Mammary epithelial cell (primary cell): ENCODE measurements at regions of chr1 and their contacts with region 1.

Region 1: GRCh38 chr1:81800695-81801650 is at the start of gene ADGRL2:
- DNase-seq: peak; percentile 91
- H3K4me3 ChIP-seq: peak within 1 kb of the TSS; percentile 80 to 94 (median 85)
- H3K27ac ChIP-seq: peak within 1 kb of the TSS; percentile 81
- H3K4me1 ChIP-seq: no peaks in the 10 kb centered on the region
- H3K27me3 ChIP-seq: no peaks in the 10 kb centered on the region
- CTCF ChIP-seq: no peak
- total RNA-seq, gene ADGRL2: 43.7 to 105 TPM

Region 2: GRCh38 chr1:81574408-81574807 is 226.6 kb before region 1 on chr1:
- CTCF ChIA-PET with region 1: no interaction called
- dilution Hi-C with region 1: no loop called
- in situ Hi-C with region 1: no loop called
- intact Hi-C with region 1: no loop called
- DNase-seq: no peak
- H3K4me3 ChIP-seq: no peak overlapping the region
- H3K27ac ChIP-seq: no peak overlapping the region
- H3K4me1 ChIP-seq: no peaks in the 10 kb centered on the region
- H3K27me3 ChIP-seq: no peaks in the 10 kb centered on the region
- CTCF ChIP-seq: no peak

Region 3: DNA sequence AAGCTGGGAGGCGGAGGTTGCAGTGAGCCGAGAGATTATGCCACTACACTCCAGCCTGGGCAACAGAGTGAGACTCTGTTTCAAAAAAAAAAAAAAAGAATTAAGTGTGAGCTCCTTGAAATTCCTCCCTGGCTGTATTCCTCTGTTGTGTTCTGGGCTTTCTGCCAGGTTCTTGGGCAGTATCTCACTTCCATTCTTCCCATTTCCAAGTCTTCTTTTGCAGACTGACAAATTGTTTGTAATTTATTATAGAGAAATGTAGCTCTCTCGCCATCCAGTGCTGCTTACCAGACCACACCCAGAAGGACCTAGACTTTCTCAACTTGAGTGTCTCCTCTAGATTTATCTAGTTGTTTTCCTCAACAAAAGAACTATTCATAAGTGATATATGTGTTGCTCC is 105.2 kb before region 1 on chr1:
- CTCF ChIA-PET with region 1: no interaction called
- dilution Hi-C with region 1: no loop called
- in situ Hi-C with region 1: no loop called
- intact Hi-C with region 1: loop called (anchors 5 kb)
- DNase-seq: peak; percentile 35
- H3K4me3 ChIP-seq: no peak overlapping the region
- H3K27ac ChIP-seq: no peak overlapping the region
- H3K4me1 ChIP-seq: peaks cover 15% of the 10 kb centered on the region
- H3K27me3 ChIP-seq: no peaks in the 10 kb centered on the region
- CTCF ChIP-seq: no peak

Region 4: GRCh38 chr1:81876901-81877733 is 76.1 kb after region 1 on chr1:
- CTCF ChIA-PET with region 1: no interaction called
- dilution Hi-C with region 1: no loop called
- in situ Hi-C with region 1: no loop called
- intact Hi-C with region 1: loop called (anchors 5 kb)
- DNase-seq: peak; percentile 64
- H3K4me3 ChIP-seq: no peak overlapping the region
- H3K27ac ChIP-seq: peak overlapping the region; percentile 11
- H3K4me1 ChIP-seq: peaks cover 17% of the 10 kb centered on the region
- H3K27me3 ChIP-seq: no peaks in the 10 kb centered on the region
- CTCF ChIP-seq: no peak

Region 5: GRCh38 chr1:82090104-82090503 is 289.1 kb after region 1 on chr1:
- CTCF ChIA-PET with region 1: no interaction called
- dilution Hi-C with region 1: no loop called
- in situ Hi-C with region 1: no loop called
- intact Hi-C with region 1: loop called (anchors 5 kb)
- DNase-seq: no peak
- H3K4me3 ChIP-seq: no peak overlapping the region
- H3K27ac ChIP-seq: no peak overlapping the region
- H3K4me1 ChIP-seq: peaks cover 8% of the 10 kb centered on the region
- H3K27me3 ChIP-seq: no peaks in the 10 kb centered on the region
- CTCF ChIP-seq: peak; percentile 44 to 62

Region 6: GRCh38 chr1:82168482-82168881 is 367.5 kb after region 1 on chr1:
- CTCF ChIA-PET with region 1: no interaction called
- dilution Hi-C with region 1: no loop called
- in situ Hi-C with region 1: no loop called
- intact Hi-C with region 1: no loop called
- DNase-seq: no peak
- H3K4me3 ChIP-seq: no peak overlapping the region
- H3K27ac ChIP-seq: no peak overlapping the region
- H3K4me1 ChIP-seq: no peaks in the 10 kb centered on the region
- H3K27me3 ChIP-seq: no peaks in the 10 kb centered on the region
- CTCF ChIP-seq: no peak

Region 7: GRCh38 chr1:82225421-82226185 is 424.6 kb after region 1 on chr1:
- CTCF ChIA-PET with region 1: no interaction called
- dilution Hi-C with region 1: no loop called
- in situ Hi-C with region 1: no loop called
- intact Hi-C with region 1: loop called (anchors 5 kb)
- DNase-seq: peak; percentile 77
- H3K4me3 ChIP-seq: no peak overlapping the region
- H3K27ac ChIP-seq: peak overlapping the region; percentile 79
- H3K4me1 ChIP-seq: peaks cover 28% of the 10 kb centered on the region
- H3K27me3 ChIP-seq: no peaks in the 10 kb centered on the region
- CTCF ChIP-seq: no peak

Region 8: DNA sequence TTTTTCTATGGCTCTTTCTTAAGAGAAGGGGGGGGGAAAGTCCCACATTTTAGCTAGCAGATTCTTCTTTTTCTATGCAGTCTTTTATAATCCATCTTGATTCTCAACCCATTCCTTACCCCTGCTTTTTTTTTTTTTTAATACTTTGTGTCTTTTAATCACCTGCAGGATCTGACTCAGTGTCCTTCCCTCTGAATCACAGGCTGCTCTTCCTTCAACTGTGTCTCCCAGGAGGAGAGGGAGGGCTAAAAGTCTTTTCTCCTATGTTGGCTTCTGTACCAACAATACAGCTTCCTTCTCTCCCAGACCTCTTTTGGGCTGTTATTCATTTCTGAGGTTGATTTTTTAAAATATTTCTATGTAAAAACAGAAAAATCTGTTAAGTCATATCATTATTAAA is 686.0 kb after region 1 on chr1:
- CTCF ChIA-PET with region 1: interaction called, 12 read pairs
- dilution Hi-C with region 1: no loop called
- in situ Hi-C with region 1: no loop called
- intact Hi-C with region 1: no loop called
- DNase-seq: peak; percentile 38
- H3K4me3 ChIP-seq: no peak overlapping the region
- H3K27ac ChIP-seq: no peak overlapping the region
- H3K4me1 ChIP-seq: peaks cover 18% of the 10 kb centered on the region
- H3K27me3 ChIP-seq: no peaks in the 10 kb centered on the region
- CTCF ChIP-seq: no peak